CD4-positive, alpha-beta memory T cell (primary cell): ENCODE measurements at regions of chr3 and their contacts with region 1.

Region 1: GRCh38 chr3:46895204-46895660 is 17.7 kb downstream of the PTH1R start:
- DNase-seq: peak; percentile 71 to 78 (median 74)
- H3K4me3 ChIP-seq: no peak overlapping the region
- H3K4me3 Mint-ChIP-seq: peak overlapping the region in 1 of 8 donors; percentile 18
- H3K27ac ChIP-seq: no peak overlapping the region
- H3K27ac Mint-ChIP-seq: peak overlapping the region in 4 of 7 donors; percentile 0 to 66 (median 46)
- H3K4me1 ChIP-seq: peaks cover 5% of the 10 kb centered on the region
- H3K4me1 Mint-ChIP-seq: peaks cover 6 to 26% (median 15%) of the 10 kb centered on the region in 4 donors
- H3K27me3 ChIP-seq: peaks cover 3% of the 10 kb centered on the region
- H3K27me3 Mint-ChIP-seq: peaks cover 25 to 46% of the 10 kb centered on the region in 2 donors

Region 2: GRCh38 chr3:46778101-46778500 is 117.1 kb before region 1 on chr3:
- CTCF ChIA-PET with region 1: no interaction called
- POLR2A ChIA-PET with region 1: no interaction called
- intact Hi-C with region 1: no loop called
- DNase-seq: no peak
- H3K4me3 ChIP-seq: no peak overlapping the region
- H3K4me3 Mint-ChIP-seq: no peak overlapping the region
- H3K27ac ChIP-seq: no peak overlapping the region
- H3K27ac Mint-ChIP-seq: no peak overlapping the region
- H3K4me1 ChIP-seq: no peaks in the 10 kb centered on the region
- H3K4me1 Mint-ChIP-seq: no peaks in the 10 kb centered on the region
- H3K27me3 ChIP-seq: no peaks in the 10 kb centered on the region
- H3K27me3 Mint-ChIP-seq: peaks cover 9% of the 10 kb centered on the region in 2 donors

Region 3: GRCh38 chr3:46909535-46910442 is 14.6 kb after region 1 on chr3:
- CTCF ChIA-PET with region 1: interaction called, 12 read pairs
- POLR2A ChIA-PET with region 1: interaction called, 3 read pairs
- intact Hi-C with region 1: no loop called
- DNase-seq: peak; percentile 64 to 82 (median 70)
- H3K4me3 ChIP-seq: no peak overlapping the region
- H3K4me3 Mint-ChIP-seq: peak overlapping the region in 1 of 8 donors; percentile 23
- H3K27ac ChIP-seq: no peak overlapping the region
- H3K27ac Mint-ChIP-seq: peak overlapping the region in 2 of 7 donors; percentile 4 to 30
- H3K4me1 ChIP-seq: peaks cover 27% of the 10 kb centered on the region
- H3K4me1 Mint-ChIP-seq: peaks cover 13 to 18% (median 17%) of the 10 kb centered on the region in 4 donors
- H3K27me3 ChIP-seq: no peaks in the 10 kb centered on the region
- H3K27me3 Mint-ChIP-seq: no peaks in the 10 kb centered on the region